Natural killer cell (primary cell): ENCODE measurements at regions of chr14 and their contacts with region 1.

Region 1: DNA sequence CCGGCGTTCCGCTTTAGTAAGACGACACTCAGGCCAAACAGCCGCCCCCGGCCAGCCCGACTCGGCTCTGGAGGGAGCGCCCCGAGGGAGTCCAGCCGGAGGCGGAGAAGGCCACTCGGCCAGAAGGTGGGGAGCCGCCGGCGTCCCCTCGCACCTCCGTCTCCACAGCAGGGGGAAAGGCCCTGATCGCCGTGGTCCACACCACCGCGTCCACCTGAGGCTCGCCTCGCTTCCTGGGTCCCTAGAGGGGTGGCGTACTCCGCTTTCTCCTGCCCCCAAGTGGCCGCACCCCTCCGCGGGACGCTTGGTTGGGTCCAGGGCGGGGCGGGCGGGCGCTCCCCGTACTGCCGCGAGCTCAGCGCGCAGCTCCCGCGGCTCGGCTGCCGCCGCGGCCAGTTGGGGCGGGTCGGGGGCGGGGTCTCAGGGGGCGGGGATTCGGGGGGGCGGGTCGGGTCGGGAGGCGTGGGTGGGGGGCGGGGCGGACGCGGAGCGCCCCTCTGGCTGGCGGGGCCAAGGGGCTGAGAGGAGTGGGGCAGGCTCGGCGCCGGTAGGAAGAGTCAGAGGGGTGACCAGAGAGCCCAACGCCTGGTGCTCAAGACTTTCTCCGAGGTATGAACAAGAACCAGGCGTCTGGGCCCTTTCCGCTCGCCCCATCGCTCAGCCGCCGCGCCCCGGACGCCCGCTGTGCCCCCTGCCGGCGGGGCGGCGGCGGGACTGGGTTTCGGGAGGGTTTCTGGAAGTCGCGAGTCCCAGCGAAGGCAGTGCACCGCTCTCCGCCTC is at the start of gene FRMD6:
- DNase-seq: peak; percentile 77 to 88
- ATAC-seq: peak; percentile 84 to 94 (median 85)
- H3K4me3 ChIP-seq: peak within 1 kb of the TSS; percentile 98
- H3K4me3 Mint-ChIP-seq: peak within 1 kb of the TSS; percentile 82
- H3K27ac ChIP-seq: peak within 1 kb of the TSS; percentile 92
- H3K27ac Mint-ChIP-seq: peak within 1 kb of the TSS; percentile 31 to 73
- H3K4me1 ChIP-seq: peaks cover 17% of the 10 kb centered on the region
- H3K4me1 Mint-ChIP-seq: peaks cover 12 to 13% of the 10 kb centered on the region in 2 donors
- H3K27me3 ChIP-seq: peaks cover 36% of the 10 kb centered on the region
- H3K27me3 Mint-ChIP-seq: peaks cover 17 to 35% of the 10 kb centered on the region in 2 donors
- CTCF ChIP-seq: peak; percentile 78
- total RNA-seq, gene FRMD6: 1.5 to 3.8 (median 2.3) TPM

Region 2: DNA sequence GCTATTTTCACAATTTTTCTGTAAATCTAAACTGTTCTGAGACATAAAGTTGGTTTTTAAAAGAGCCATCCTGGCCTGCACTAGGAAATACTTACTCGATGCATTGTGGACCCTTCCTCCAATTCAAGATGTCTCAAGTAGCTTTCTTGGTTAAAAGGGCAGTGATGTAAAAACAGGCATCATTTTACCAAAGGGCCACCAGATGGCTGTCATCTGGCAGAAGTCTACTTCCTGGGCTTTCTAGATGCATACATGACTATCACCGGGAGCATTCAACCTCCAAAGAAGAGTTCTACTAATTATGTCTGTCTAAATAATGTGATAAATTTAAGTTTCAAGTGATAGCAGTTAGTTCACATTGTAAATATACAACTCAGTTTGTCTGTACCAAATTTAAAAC is 96.6 kb before region 1 on chr14:
- intact Hi-C with region 1: loop called (anchors 5 kb)
- DNase-seq: peak in 1 of 2 donors; percentile 38
- ATAC-seq: peak; percentile 24 to 75 (median 50)
- H3K4me3 ChIP-seq: no peak overlapping the region
- H3K4me3 Mint-ChIP-seq: no peak overlapping the region
- H3K27ac ChIP-seq: no peak overlapping the region
- H3K27ac Mint-ChIP-seq: no peak overlapping the region
- H3K4me1 ChIP-seq: no peaks in the 10 kb centered on the region
- H3K4me1 Mint-ChIP-seq: no peaks in the 10 kb centered on the region
- H3K27me3 ChIP-seq: peaks cover 4% of the 10 kb centered on the region
- H3K27me3 Mint-ChIP-seq: peaks cover 16 to 31% of the 10 kb centered on the region in 2 donors
- CTCF ChIP-seq: peak; percentile 54

Region 3: DNA sequence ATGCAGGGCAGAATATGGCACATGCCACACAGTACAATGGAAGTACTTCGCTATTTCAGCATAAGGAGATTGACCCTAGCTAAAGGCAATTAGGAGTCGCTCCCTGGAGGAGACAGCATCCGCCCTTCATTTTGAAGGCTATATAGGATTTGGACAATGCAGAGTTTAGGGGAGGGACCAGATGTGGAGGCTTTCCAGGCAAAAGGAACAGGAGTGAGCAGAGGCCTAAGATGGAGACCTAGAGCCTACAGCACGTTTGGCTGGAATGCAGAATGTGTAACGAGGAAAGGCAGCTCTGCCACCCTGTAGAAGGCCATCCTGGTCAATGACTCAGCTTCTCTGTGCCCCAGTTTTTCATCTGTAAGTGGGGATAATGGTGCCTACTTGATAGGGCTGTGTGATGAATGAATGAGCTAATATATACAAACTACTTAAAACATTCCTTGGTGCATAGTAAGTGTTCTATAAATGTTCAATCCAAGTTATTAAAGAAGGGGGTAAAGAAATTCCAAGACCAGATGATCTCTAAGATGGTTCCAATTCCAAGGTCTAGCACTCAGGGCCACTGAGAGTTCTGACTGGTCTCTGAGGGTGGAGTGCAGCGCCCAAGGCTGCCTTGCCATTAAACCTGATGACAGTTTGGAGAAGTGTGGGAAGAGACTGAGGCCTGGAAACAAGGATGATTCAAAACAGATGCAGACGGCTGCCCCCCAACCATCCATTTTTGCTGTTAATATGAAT is 54.1 kb before region 1 on chr14:
- intact Hi-C with region 1: loop called (anchors 1 kb)
- DNase-seq: no peak
- ATAC-seq: no peak
- H3K4me3 ChIP-seq: no peak overlapping the region
- H3K4me3 Mint-ChIP-seq: no peak overlapping the region
- H3K27ac ChIP-seq: no peak overlapping the region
- H3K27ac Mint-ChIP-seq: peak overlapping the region; percentile 28 to 76
- H3K4me1 ChIP-seq: peaks cover 18% of the 10 kb centered on the region
- H3K4me1 Mint-ChIP-seq: peaks cover 32 to 64% of the 10 kb centered on the region in 2 donors
- H3K27me3 ChIP-seq: peaks cover 6% of the 10 kb centered on the region
- H3K27me3 Mint-ChIP-seq: peaks cover 18 to 41% of the 10 kb centered on the region in 2 donors
- CTCF ChIP-seq: no peak

Region 4: DNA sequence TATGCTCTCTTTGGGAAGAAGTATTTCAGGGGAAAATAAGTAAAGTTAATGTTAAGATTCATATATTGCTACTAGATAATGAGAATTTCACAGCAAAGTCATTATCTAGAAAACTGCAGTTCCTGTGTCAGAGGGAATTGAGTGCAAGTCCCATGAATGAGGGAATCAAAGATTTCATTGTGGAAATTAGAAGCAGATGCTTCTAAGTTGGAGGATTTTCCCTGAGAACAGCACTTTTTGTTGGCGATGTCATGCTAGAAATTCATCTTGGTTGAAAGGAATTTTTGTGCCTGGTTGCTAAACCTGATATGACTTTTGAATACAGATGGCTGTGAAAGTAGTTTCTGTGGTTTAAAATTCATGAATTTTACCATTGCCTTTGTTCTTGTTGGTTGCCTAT is 25.7 kb after region 1 on chr14:
- intact Hi-C with region 1: no loop called
- DNase-seq: no peak
- ATAC-seq: no peak
- H3K4me3 ChIP-seq: no peak overlapping the region
- H3K4me3 Mint-ChIP-seq: no peak overlapping the region
- H3K27ac ChIP-seq: no peak overlapping the region
- H3K27ac Mint-ChIP-seq: no peak overlapping the region
- H3K4me1 ChIP-seq: no peaks in the 10 kb centered on the region
- H3K4me1 Mint-ChIP-seq: no peaks in the 10 kb centered on the region
- H3K27me3 ChIP-seq: peaks cover 6% of the 10 kb centered on the region
- H3K27me3 Mint-ChIP-seq: peaks cover 11 to 34% of the 10 kb centered on the region in 2 donors
- CTCF ChIP-seq: no peak

Region 5: GRCh38 chr14:51950007-51950406 is 298.4 kb after region 1 on chr14:
- intact Hi-C with region 1: no loop called
- DNase-seq: no peak
- ATAC-seq: no peak
- H3K4me3 ChIP-seq: no peak overlapping the region
- H3K4me3 Mint-ChIP-seq: no peak overlapping the region
- H3K27ac ChIP-seq: no peak overlapping the region
- H3K27ac Mint-ChIP-seq: peak overlapping the region; percentile 57 to 94
- H3K4me1 ChIP-seq: no peaks in the 10 kb centered on the region
- H3K4me1 Mint-ChIP-seq: peaks cover 84 to 85% of the 10 kb centered on the region in 2 donors
- H3K27me3 ChIP-seq: no peaks in the 10 kb centered on the region
- H3K27me3 Mint-ChIP-seq: no peaks in the 10 kb centered on the region
- CTCF ChIP-seq: no peak

Region 6: GRCh38 chr14:51989293-51990234 is 338.0 kb after region 1 on chr14 and contains the start of gene RTRAF:
- intact Hi-C with region 1: loop called (anchors 10 kb)
- DNase-seq: peak; percentile 91 to 97
- ATAC-seq: peak; percentile 97 to 98 (median 98)
- H3K4me3 ChIP-seq: peak within 1 kb of the TSS; percentile 58
- H3K4me3 Mint-ChIP-seq: peak within 1 kb of the TSS; percentile 93
- H3K27ac ChIP-seq: peak within 1 kb of the TSS; percentile 83
- H3K27ac Mint-ChIP-seq: peak within 1 kb of the TSS; percentile 90 to 91
- H3K4me1 ChIP-seq: peaks cover 7% of the 10 kb centered on the region
- H3K4me1 Mint-ChIP-seq: peaks cover 15% of the 10 kb centered on the region in 2 donors
- H3K27me3 ChIP-seq: no peaks in the 10 kb centered on the region
- H3K27me3 Mint-ChIP-seq: no peaks in the 10 kb centered on the region
- CTCF ChIP-seq: no peak
- total RNA-seq, gene RTRAF: 84.3 to 96.5 (median 92.7) TPM